OCI-LY7 (cell line): ENCODE measurements at regions of chr12 and their contacts with region 1.

Region 1: DNA sequence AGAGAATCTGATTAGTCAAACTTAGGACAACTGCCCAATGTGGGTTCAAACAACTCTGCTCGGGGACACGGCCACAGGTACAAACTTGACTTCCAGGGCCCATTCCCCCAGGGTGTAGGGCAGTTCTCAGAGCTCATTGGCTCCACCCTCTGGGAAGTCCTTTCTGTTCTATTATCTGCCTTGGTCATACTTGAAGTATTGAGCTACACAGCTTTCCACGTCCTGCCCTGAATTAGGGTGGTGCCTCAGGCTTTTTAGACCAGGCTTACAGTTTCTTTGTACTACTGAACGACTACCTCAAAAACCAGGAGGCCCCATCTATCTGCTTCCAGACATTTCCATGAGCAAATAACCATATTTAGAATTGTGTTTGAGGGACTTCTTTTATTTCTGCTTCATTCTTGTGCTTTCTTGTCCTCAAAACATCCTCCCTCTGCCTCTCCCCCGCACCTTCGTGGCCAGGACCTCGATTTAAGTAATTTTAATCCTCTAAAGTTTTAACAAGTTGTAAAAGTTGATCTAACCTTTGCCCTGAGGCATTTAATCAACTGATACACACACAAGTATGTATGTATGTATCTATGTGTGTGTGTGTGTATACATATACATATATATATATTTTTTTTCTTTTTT is 281.7 kb upstream of the AMIGO2 start:
- DNase-seq: peak; percentile 79
- H3K4me3 ChIP-seq: peak overlapping the region; percentile 54
- H3K27ac ChIP-seq: peak overlapping the region; percentile 49
- H3K4me1 ChIP-seq: peaks cover 39% of the 10 kb centered on the region
- CTCF ChIP-seq: peak; percentile 63

Region 2: GRCh38 chr12:47312808-47313426 is 48.6 kb before region 1 on chr12:
- CTCF ChIA-PET with region 1: no interaction called
- POLR2A ChIA-PET with region 1: interaction called, 5 read pairs
- intact Hi-C with region 1: loop called (anchors 5 kb)
- DNase-seq: peak; percentile 80
- H3K4me3 ChIP-seq: no peak overlapping the region
- H3K27ac ChIP-seq: no peak overlapping the region
- H3K4me1 ChIP-seq: peaks cover 23% of the 10 kb centered on the region
- CTCF ChIP-seq: no peak